ENCODE measurements at regions of chr7 and their contacts with region 1.

Region 1: DNA sequence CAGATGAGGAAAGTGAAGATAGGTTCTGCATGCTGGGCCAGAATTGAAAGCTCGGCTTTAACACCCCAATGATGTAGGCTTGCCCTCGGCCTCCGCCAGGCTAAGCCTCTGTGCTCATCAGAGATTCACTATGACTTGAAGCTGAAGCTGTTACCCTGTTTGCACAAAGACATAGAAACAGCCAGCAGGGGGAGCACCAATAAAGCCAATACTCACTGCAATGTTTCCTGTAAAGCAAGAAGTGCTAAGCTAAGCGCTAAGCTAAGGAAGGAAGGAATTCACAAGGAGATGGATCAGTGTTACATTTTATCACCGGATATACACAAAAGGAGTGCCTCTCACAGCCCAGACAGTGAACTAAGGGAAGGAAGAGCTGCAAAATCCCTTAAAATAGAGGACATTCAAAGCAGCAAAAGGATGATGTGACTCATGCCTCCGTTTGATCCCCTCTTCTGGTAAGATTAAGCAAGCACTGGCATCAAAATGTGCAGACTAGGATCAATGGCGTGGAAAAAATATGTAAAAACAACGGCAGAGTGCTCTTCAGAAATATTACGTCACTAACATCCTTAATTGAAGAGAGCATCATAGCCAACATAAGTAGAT is 153.8 kb downstream of the COBL start:
- DNase-seq: peak; percentile 80 to 81
- H3K4me3 ChIP-seq: no peak overlapping the region
- H3K27ac ChIP-seq: no peak overlapping the region
- H3K4me1 ChIP-seq: peaks cover 5% of the 10 kb centered on the region; the same call in 1 of the 2 replicates
- H3K27me3 ChIP-seq: no peaks in the 10 kb centered on the region
- CTCF ChIP-seq: peak; percentile 99

Region 2: DNA sequence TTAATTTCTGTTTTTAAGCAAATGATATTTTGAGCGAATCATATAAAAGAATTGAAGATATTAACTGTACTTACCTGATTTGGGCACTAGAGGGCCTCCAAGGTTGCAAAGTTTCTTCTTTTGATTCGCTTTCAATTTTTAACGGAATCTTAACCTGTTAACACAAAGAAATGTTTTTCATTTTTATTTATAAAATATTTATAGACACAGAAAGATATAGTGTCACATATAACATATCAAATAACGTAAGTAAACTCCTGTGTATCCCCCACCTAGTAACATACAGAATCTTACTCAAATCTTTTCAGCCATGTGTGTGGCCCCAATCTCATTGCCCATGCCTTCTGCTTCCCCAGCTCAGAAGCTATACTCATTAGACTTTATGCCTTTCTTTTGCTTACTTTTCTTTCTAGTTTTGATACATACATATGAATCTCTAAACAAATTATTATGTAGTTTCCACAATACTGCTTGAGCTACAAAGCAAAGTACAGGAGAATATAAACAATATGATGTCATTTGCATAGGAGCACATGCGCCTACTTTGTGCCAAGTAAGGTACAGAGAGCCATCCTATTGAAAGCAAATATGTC is 1020.3 kb before region 1 on chr7:
- CTCF ChIA-PET with region 1: interaction called, 5 read pairs
- POLR2A ChIA-PET with region 1: no interaction called
- intact Hi-C with region 1: loop called (anchors 2 kb)
- DNase-seq: no peak
- H3K4me3 ChIP-seq: no peak overlapping the region
- H3K27ac ChIP-seq: no peak overlapping the region
- H3K4me1 ChIP-seq: no peaks in the 10 kb centered on the region
- H3K27me3 ChIP-seq: peaks cover 12% of the 10 kb centered on the region; the same call in 1 of the 2 replicates
- CTCF ChIP-seq: peak; percentile 86

Region 3: DNA sequence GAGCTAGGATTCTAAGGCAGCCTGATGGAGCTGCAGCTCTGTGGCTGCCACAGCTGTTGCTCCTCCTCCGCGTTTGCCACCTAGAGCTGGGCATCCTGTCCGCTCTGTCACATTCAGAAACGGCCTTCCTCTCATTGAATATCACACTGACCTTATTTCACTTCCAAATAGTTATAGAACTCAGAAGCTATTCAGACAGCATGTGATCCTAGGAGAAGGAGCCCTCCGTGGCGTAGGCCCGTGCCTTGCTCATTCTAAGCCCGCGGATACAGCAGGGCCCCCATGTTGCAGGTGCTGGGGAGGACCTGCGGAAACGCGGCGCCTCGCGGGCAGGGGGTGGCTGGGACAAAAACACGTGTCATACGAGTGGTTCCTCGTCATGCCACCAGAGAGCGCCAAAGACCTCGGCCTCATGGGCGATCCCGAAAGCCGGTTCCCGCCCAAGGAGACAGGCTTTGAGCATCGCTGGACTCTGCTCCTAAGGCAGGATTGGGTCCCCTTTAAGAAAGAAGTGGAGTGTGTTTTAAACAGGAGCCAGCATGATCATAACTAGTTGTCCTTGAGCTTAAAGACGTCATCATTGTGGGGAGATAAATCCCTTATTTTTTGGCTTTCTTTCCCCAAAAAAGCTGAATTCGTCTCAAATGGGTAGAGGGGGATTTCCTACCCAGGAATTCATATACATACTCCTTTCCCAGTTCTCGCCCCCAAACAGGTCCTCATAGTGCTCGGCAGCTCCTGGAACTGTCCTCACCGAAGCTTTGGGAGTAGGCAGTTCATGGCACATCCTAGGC is 694.8 kb before region 1 on chr7:
- CTCF ChIA-PET with region 1: interaction called, 4 read pairs
- POLR2A ChIA-PET with region 1: no interaction called
- intact Hi-C with region 1: loop called (anchors 1 kb)
- DNase-seq: peak; percentile 55 to 86
- H3K4me3 ChIP-seq: peak overlapping the region; percentile 38; the same call in 1 of the 2 replicates
- H3K27ac ChIP-seq: no peak overlapping the region
- H3K4me1 ChIP-seq: peaks cover 4% of the 10 kb centered on the region
- H3K27me3 ChIP-seq: no peaks in the 10 kb centered on the region
- CTCF ChIP-seq: peak; percentile 99

Region 4: DNA sequence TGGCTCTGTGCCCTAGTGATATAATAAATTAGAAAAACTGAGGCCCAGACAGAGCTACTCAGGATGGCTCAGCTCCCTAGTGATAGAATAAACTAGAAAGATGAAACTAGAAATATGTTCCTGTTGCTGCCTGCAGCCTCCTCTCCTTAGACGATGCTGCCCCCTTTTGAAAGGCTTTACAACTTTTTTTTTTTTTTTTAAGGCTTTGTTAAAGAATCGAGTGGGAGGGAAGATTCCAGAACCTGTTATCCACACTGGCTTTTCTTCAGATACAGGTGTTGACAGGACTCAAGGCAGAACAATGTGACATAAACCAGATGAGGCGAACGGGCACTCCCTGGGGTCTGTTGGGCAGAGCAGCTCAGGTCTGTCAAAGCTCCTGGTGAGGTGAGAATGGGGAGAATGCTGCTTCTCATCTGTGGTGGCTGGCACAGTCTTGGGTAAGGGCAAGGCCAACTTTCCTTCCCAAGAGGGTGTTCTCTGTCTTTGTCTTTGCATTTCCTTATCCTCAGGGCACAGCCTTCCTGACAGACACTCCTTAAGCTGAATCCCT is 21.3 kb before region 1 on chr7:
- CTCF ChIA-PET with region 1: interaction called, 11 read pairs
- POLR2A ChIA-PET with region 1: no interaction called
- intact Hi-C with region 1: no loop called
- DNase-seq: peak in 1 of 2 experiments; percentile 17
- H3K4me3 ChIP-seq: no peak overlapping the region
- H3K27ac ChIP-seq: no peak overlapping the region
- H3K4me1 ChIP-seq: peaks cover 11% of the 10 kb centered on the region
- H3K27me3 ChIP-seq: no peaks in the 10 kb centered on the region
- CTCF ChIP-seq: peak; percentile 89

Region 5: DNA sequence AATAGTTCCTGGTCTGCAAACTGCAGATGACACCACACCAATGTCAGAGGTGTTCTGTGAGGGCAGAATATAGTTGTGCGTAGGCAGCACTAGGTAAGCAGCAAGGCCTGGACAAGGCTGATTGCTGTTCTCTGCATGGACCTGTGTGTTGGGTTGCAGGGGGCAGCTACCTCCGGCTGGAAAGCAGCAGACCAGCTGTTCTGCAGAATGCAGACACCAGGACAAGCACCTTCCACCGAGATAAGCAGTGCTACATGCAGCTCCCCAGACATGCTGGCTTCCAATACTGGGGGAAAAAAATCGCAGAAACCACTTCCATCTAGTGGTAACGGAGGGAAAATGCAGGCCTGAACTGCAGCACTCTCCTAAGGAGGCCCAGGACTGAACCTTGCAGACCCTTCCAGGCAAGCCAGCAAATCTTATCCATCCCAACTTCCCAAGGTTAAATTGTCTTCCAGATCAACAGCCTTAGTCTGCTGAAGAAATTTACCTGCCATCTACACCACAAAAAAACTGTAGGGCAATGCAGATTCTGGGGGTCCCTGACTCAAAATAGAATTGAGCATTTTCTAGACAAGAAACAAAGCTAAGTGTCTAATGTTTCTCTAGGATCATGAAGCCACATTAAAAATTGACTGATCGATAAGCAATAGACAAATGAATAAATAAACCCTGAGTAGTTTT is 204.2 kb after region 1 on chr7:
- CTCF ChIA-PET with region 1: interaction called, 100 read pairs
- POLR2A ChIA-PET with region 1: no interaction called
- intact Hi-C with region 1: loop called (anchors 1 kb)
- DNase-seq: peak; percentile 54 to 61
- H3K4me3 ChIP-seq: no peak overlapping the region
- H3K27ac ChIP-seq: no peak overlapping the region
- H3K4me1 ChIP-seq: peaks cover 7% of the 10 kb centered on the region
- H3K27me3 ChIP-seq: no peaks in the 10 kb centered on the region
- CTCF ChIP-seq: peak; percentile 96

Region 6: DNA sequence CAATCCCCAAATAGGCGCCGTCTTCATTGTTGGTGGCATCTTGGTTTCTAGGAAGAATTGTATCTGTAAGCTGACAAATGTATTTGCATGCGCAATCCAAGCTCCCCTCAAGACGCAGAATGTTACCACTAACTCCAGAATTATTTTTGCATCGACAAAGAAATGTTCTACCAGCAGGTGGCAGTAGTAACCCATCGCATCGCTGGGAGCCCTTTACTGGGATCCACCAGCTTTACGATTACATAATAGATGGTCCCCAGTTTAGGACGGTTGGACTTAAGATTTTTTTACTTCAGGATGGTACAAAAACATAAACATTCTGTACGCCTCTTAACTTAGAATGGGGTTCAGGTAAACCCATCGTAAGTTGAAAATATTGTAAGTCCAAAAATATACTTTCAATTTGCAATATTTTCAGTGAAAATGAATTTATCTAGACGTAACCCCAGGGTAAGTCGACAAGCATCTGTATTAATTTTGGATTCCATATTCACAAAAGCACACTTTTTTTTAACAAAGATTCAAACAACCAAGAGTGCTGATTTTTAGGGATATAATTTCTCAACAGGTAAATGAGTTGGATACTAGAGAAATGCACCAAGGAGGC is 267.8 kb after region 1 on chr7:
- CTCF ChIA-PET with region 1: interaction called, 18 read pairs
- POLR2A ChIA-PET with region 1: no interaction called
- intact Hi-C with region 1: loop called (anchors 1 kb)
- DNase-seq: peak; percentile 50 to 60
- H3K4me3 ChIP-seq: no peak overlapping the region
- H3K27ac ChIP-seq: no peak overlapping the region
- H3K4me1 ChIP-seq: no peaks in the 10 kb centered on the region
- H3K27me3 ChIP-seq: peaks cover 60% of the 10 kb centered on the region
- CTCF ChIP-seq: peak; percentile 98